PC-9 (cell line): ENCODE measurements at regions of chr6 and their contacts with region 1.

Region 1: DNA sequence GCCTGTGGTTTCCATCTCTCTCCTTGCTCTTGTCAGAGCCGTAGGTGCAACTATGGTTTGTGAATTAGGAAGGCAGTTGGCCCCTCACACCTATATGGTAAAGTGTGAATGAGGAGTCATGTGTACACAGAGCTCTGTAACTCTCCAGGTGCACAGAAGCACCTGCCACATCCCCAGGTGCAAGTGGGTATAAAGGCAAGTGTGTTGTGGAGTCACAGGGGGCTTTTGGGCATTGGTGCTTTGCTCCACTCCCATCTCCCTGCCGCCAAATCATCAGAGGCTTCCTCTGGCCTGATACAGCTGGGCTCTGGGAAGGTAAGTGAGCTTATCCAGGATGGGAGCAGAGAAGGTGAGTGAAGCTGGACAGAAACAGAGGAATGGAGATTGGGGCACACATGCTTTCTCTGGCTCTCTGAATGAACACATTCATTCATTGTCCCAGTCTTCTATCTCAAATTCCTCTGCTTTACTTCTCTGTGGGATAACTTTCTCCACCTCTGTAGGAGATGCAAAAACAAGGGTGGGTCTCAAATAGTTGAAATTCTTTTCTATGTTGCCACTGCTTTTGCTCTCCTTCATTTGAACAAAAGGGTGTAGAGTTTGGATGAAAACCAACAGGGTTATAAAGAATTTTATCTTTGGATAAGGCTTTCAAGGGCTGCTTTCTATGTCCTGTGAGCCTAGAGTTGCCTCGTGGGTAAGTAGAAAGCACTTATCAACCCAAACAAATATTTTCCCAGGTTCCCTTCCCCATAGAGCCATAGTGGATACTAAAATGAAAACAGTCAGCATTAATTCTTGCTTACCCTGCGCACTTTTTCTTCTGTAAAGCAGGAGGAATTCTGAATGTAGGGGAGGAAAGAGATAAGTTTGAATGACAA is 45.0 kb upstream of the RIPOR2 start:
- DNase-seq: peak; percentile 44 to 88
- H3K4me3 ChIP-seq: no peak overlapping the region
- H3K27ac ChIP-seq: peak overlapping the region; percentile 64
- H3K4me1 ChIP-seq: peaks cover 35% of the 10 kb centered on the region
- H3K27me3 ChIP-seq: no peaks in the 10 kb centered on the region
- CTCF ChIP-seq: no peak

Region 2: DNA sequence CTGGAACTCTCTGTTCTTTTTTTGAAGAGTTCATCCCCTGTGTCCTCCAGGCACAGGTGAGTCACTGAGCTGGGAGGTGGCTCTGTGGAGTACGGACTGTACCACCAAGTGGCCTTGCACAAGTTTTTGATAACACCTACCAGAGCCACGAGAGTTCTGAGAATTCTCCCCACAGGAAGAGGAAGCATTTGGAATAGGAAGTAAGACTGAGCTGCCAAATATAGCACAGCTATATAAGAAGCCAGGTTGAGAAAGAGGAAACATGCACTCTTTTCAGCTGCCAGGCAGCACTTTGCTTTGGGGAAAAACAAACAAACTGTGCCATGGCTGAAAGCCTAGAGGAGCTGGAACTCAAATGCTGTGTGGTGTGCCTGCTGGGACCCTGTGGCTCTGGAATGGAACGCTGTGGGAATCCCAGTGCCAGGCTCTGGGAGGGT is 25.8 kb after region 1 on chr6:
- CTCF ChIA-PET with region 1: no interaction called
- POLR2A ChIA-PET with region 1: interaction called, 3 read pairs
- intact Hi-C with region 1: loop called (anchors 2 kb)
- DNase-seq: peak; percentile 67 to 92
- H3K4me3 ChIP-seq: no peak overlapping the region
- H3K27ac ChIP-seq: peak overlapping the region; percentile 69
- H3K4me1 ChIP-seq: peaks cover 49% of the 10 kb centered on the region
- H3K27me3 ChIP-seq: no peaks in the 10 kb centered on the region
- CTCF ChIP-seq: no peak

Region 3: DNA sequence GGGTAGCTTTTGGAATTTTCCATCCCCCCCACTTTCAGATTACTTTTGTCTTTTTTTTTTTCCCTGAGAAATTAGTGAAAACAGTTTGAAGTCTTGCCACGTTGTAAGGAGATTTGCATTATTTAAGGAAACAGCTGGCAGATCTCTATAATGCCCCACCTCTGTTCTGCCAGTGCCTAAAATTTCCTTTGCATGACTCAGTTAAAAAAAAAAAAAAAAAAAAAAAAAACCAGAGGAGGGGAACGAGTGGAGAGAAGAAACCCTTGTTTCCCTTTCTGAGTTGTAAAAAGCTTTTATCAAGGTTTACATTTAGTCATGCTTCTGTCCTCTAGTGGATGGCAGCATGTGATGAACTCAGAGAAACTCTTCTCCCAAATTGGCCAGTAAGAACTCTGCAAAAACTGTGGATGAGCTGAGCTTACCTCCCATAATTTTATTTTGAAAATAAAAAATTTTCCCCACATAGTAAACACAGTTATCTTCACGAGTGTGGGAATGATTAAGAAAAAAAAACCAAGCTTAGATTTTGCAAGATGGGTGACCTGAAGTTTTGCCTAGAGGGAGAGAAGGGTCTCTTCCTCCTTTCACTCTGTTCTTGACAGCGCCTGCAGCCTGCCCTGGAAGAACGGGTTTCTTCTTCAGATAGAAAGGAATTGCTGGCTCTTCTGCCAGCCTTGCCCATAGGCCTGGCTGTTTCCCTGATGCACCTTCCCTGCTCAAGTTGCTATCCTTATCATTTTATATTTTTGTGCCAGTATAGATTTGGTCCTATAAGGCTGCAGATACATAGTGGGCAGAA is 332.2 kb after region 1 on chr6:
- CTCF ChIA-PET with region 1: no interaction called
- POLR2A ChIA-PET with region 1: interaction called, 12 read pairs
- intact Hi-C with region 1: no loop called
- DNase-seq: peak; percentile 32 to 76
- H3K4me3 ChIP-seq: peak overlapping the region; percentile 11; the same call in 1 of the 2 replicates
- H3K27ac ChIP-seq: peak overlapping the region; percentile 54
- H3K4me1 ChIP-seq: peaks cover 37% of the 10 kb centered on the region
- H3K27me3 ChIP-seq: no peaks in the 10 kb centered on the region
- CTCF ChIP-seq: no peak